HEK293T (cell line): ENCODE measurements at regions of chr5 and their contacts with region 1.

Region 1: DNA sequence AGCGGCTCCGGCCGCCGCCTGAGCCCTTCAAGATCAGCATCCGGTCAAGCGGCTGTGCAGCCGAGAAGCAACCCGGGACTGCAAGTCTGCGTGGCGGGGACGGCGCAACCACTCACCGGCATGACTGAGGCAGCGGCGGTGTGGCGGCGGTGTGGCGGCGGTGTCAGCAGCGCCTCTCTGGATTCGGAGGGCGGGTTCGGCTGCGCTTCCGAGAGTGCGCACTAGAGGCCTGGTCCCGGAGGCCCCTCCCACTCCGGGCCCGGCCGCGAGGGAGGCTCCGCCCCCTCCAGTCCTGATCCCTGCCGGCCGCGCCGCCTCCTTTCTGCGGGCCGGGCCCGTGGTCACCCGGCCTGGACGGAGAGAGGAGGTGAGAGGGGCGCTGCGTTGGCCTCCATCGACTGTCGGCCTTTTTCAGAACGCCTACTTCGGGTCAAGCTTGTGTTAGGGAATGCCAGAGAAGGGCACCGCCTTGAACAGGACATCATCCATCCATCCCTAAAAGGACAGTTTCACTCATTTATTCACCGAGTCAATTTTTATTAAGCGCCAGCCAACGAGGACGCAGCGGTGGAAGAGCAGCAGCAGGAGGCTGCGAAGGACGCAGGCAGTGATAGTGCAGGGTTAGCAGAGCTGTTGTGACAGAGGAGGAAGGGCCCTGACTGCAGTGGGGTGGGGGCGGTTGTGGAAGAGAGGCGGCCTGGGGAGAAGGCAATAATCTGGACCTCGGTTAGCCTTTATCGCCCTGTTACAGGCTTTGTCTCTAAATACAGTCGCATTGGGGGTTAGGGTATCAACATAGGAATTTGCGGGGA is at the start of gene ATOX1:
- DNase-seq: peak; percentile 98

Region 2: GRCh38 chr5:151740336-151740942 is 18.2 kb before region 1 on chr5:
- CTCF ChIA-PET with region 1: interaction called, 11 read pairs
- POLR2A ChIA-PET with region 1: interaction called, 3 read pairs
- DNase-seq: peak; percentile 74

Region 3: GRCh38 chr5:151771259-151772028 is 12.8 kb after region 1 on chr5 and contains the start of gene G3BP1:
- CTCF ChIA-PET with region 1: interaction called, 3 read pairs
- POLR2A ChIA-PET with region 1: interaction called, 84 read pairs
- DNase-seq: peak; percentile 91

Region 4: GRCh38 chr5:151825445-151825844 is 66.8 kb after region 1 on chr5:
- CTCF ChIA-PET with region 1: no interaction called
- POLR2A ChIA-PET with region 1: no interaction called
- DNase-seq: peak; percentile 71